ENCODE measurements at regions of chr17 and their contacts with region 1.

Region 1: GRCh38 chr17:69327060-69327831 is at the start of gene ABCA5:
- DNase-seq: peak; percentile 43
- ATAC-seq: peak; percentile 99
- H3K4me3 ChIP-seq: peak within 1 kb of the TSS; percentile 69 to 70
- H3K27ac ChIP-seq: peak within 1 kb of the TSS; percentile 77
- H3K4me1 ChIP-seq: peaks cover 3% of the 10 kb centered on the region; the same call in 1 of the 2 replicates
- H3K27me3 ChIP-seq: no peaks in the 10 kb centered on the region
- CTCF ChIP-seq: no peak
- total RNA-seq, gene ABCA5: 13.3 TPM

Region 2: GRCh38 chr17:69192754-69193153 is 134.5 kb before region 1 on chr17:
- CTCF ChIA-PET with region 1: no interaction called
- POLR2A ChIA-PET with region 1: no interaction called
- in situ Hi-C with region 1: no loop called
- intact Hi-C with region 1: no loop called
- DNase-seq: no peak
- ATAC-seq: no peak
- H3K4me3 ChIP-seq: no peak overlapping the region
- H3K27ac ChIP-seq: no peak overlapping the region
- H3K4me1 ChIP-seq: no peaks in the 10 kb centered on the region
- H3K27me3 ChIP-seq: no peaks in the 10 kb centered on the region
- CTCF ChIP-seq: no peak

Region 3: DNA sequence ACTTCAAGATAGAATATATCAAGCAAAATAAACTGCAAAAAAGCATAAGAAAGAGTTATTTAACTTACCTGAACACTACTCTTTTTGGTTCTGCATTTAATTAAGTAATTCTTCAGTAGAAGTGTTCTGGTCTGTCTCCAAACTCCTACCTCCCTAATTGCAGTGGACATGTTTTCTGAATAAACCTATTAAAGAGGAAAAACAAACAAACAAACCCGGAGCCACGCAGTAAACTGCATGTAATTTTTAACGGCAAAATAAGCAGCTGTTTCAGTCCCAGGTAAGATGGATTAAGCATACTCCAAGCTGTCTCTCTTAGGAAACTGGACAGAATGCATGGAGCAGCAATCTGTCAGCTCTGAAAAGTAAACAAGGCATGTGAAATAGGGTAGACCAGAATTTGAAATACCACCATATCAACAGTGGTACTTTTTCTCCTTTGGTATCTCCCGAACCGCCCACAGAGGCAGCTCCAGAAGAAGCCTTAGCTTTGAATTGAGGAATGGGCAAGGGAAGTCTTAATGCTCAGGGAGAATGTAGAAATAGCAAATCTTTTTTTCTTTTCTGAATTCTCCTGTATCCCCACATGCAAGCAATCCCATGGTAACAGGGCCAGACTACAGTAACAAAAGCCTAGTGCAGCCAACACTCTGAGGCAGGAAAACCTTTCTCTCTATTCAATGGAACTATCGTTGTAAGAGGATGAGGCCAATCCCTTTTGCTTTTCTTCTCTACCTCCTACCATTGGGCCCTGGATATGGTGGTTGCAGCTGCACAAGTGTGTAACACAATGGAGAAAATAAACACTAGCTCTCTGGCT is 12.8 kb before region 1 on chr17:
- CTCF ChIA-PET with region 1: interaction called, 13 read pairs
- POLR2A ChIA-PET with region 1: no interaction called
- in situ Hi-C with region 1: no loop called
- intact Hi-C with region 1: no loop called
- DNase-seq: no peak
- ATAC-seq: peak; percentile 65
- H3K4me3 ChIP-seq: no peak overlapping the region
- H3K27ac ChIP-seq: peak overlapping the region; percentile 40
- H3K4me1 ChIP-seq: peaks cover 14% of the 10 kb centered on the region
- H3K27me3 ChIP-seq: no peaks in the 10 kb centered on the region
- CTCF ChIP-seq: no peak

Region 4: GRCh38 chr17:69344939-69345338 is 17.7 kb after region 1 on chr17:
- CTCF ChIA-PET with region 1: no interaction called
- POLR2A ChIA-PET with region 1: no interaction called
- in situ Hi-C with region 1: no loop called
- intact Hi-C with region 1: no loop called
- DNase-seq: no peak
- ATAC-seq: no peak
- H3K4me3 ChIP-seq: no peak overlapping the region
- H3K27ac ChIP-seq: no peak overlapping the region
- H3K4me1 ChIP-seq: no peaks in the 10 kb centered on the region
- H3K27me3 ChIP-seq: no peaks in the 10 kb centered on the region
- CTCF ChIP-seq: no peak

Region 5: DNA sequence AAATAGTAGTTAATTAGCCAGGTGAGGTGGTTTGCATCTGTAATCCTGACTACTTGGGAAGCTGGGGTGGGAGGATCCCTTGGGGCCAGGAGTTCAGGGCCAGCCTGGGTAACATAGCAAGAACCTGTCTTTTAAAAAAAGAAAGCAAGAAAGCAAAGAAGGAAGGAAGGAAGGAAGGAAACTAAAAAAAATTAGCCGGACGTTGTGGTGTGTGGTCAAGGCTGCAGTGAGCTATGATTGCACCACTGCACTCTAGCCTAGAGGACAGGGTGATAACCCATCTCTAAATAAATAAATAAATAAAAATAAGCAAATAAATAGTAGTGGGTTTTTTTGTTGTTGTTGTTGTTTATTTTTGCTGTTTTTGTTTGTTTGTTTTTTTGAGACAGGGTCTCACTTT is 48.0 kb after region 1 on chr17:
- CTCF ChIA-PET with region 1: no interaction called
- POLR2A ChIA-PET with region 1: no interaction called
- in situ Hi-C with region 1: no loop called
- intact Hi-C with region 1: no loop called
- DNase-seq: no peak
- ATAC-seq: no peak
- H3K4me3 ChIP-seq: no peak overlapping the region
- H3K27ac ChIP-seq: no peak overlapping the region
- H3K4me1 ChIP-seq: no peaks in the 10 kb centered on the region
- H3K27me3 ChIP-seq: no peaks in the 10 kb centered on the region
- CTCF ChIP-seq: no peak